Psoas muscle (tissue), 8 donors: ENCODE measurements at regions of chr1 and their contacts with region 1.

Region 1: DNA sequence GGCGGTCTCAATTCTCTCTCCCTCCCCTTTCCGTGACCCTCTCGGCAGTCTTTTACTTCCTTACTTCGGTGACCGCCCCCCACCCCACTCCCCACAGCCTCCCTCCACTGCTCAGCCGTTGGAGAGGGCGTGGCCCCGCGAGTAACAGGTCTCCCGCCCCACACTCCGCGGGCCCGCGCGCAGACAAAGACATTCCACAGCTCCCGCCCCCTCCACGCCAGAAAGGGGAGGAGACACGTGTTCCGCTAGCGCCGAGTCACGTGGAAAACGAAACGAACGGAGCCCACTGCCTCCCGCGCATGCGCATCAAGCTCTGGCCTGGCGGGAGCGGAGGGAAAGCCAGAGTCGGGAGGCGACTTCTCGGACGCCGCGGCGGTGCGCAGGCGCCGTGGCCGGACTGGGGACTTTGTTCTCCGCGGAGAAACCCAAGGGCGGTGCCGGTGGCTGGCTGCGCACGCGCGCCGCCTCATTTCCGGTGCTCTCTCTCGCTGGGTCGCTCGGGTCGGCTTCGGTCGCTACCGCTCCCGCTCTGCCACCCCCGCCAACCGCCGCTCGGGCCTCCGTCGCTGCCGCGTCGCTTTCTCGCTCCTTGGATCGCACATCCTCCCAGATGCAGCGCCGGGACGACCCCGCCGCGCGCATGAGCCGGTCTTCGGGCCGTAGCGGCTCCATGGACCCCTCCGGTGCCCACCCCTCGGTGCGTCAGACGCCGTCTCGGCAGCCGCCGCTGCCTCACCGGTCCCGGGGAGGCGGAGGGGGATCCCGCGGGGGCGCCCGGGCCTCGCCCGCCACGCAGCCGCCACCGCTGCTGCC is at the start of gene KHDRBS1:
- DNase-seq: peak; percentile 99 to 100
- ATAC-seq: peak; percentile 95 to 97 (median 96)
- H3K4me3 ChIP-seq: peak within 1 kb of the TSS; percentile 99
- H3K27ac ChIP-seq: peak within 1 kb of the TSS; percentile 98
- H3K4me1 ChIP-seq: peaks cover 34% of the 10 kb centered on the region
- H3K27me3 ChIP-seq: no peaks in the 10 kb centered on the region
- CTCF ChIP-seq: no peak
- total RNA-seq, gene KHDRBS1: 46.5 to 64.5 (median 56.1) TPM

Region 2: DNA sequence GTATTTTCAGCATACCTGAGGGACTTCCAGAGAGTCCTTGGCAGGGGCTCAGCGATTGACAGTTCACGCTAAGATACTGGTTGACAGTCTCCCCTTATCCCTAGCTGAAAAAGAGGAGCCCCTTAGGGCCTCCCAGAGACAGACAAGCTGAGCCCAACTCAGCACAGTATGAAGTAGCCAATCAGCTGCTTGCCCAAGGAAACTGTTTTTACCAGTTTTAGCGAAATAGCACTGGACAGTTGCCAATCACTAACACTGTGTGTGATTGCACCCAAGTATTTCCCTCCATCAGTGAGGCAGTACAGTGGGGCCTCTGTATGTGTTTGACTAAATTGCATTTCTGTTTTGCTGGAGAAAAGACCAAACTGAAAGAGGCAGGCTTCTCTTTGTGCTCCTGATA is 27.1 kb after region 1 on chr1:
- intact Hi-C with region 1: no loop called
- DNase-seq: no peak
- ATAC-seq: no peak
- H3K4me3 ChIP-seq: no peak overlapping the region
- H3K27ac ChIP-seq: no peak overlapping the region
- H3K4me1 ChIP-seq: no peaks in the 10 kb centered on the region
- H3K27me3 ChIP-seq: no peaks in the 10 kb centered on the region
- CTCF ChIP-seq: no peak

Region 3: DNA sequence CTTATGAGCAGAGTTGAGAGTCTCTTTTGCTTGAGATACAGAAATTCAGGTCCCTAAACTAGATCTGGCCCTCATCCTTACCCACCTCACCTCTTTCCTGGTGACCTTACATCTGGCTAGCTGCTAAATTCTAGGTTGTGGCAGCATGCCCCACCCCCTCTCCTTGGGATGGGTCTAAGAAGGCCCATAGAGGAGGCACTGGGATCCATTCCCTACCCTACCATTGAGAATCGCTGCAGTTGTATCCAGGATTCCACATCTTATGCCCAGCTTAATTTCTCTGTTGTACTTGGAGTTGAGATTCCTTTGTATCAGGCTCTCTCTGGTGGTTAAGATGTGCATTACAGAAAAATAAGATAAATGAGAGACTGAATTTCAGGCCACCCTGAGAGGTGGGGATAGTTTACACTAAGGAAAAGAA is 49.7 kb after region 1 on chr1:
- intact Hi-C with region 1: loop called in 1 of 2 experiments (anchors 2 kb)
- DNase-seq: no peak
- ATAC-seq: peak; percentile 28 to 67 (median 59)
- H3K4me3 ChIP-seq: no peak overlapping the region
- H3K27ac ChIP-seq: peak overlapping the region; percentile 89
- H3K4me1 ChIP-seq: peaks cover 25% of the 10 kb centered on the region
- H3K27me3 ChIP-seq: no peaks in the 10 kb centered on the region
- CTCF ChIP-seq: peak; percentile 65

Region 4: GRCh38 chr1:32549616-32550015 is 536.0 kb after region 1 on chr1:
- intact Hi-C with region 1: no loop called
- DNase-seq: no peak
- ATAC-seq: no peak
- H3K4me3 ChIP-seq: no peak overlapping the region
- H3K27ac ChIP-seq: no peak overlapping the region
- H3K4me1 ChIP-seq: no peaks in the 10 kb centered on the region
- H3K27me3 ChIP-seq: no peaks in the 10 kb centered on the region
- CTCF ChIP-seq: no peak